Activated CD4-positive, alpha-beta memory T cell treated with anti-CD3 and anti-CD28 coated beads, Interleukin-2, amount 10 ng/mL, durations not matched to agents 7 days and 5 days (primary cell): ENCODE measurements at regions of chr16 and their contacts with region 1.

Region 1: DNA sequence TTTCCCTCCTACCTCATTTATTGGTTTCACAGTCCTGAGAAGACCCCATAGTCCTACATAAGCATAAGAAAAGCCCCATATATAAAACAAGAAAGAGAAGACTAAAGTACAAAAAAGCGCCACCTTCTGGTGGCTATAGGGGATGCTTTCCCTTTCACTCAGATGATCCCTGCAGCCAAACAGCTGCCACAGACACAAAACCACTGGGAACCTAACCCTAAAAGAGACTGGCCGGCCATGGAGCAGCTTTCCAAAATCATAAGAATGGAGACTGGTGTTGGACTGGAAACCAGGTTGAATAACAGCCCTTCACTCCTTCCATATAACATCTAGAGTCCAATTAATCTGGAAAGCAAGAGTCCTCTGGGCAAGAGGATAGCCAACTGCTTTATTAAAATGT is 11.4 kb downstream of the DYNC1LI2 start:
- DNase-seq: peak; percentile 38
- H3K4me3 Mint-ChIP-seq: no peak overlapping the region
- H3K27ac Mint-ChIP-seq: peak overlapping the region; percentile 65
- H3K4me1 Mint-ChIP-seq: peaks cover 25% of the 10 kb centered on the region
- H3K27me3 Mint-ChIP-seq: no peaks in the 10 kb centered on the region

Region 2: GRCh38 chr16:66728117-66728787 is 11.8 kb before region 1 on chr16:
- CTCF ChIA-PET with region 1: interaction called, 23 read pairs
- POLR2A ChIA-PET with region 1: interaction called, 3 read pairs
- DNase-seq: no peak
- H3K4me3 Mint-ChIP-seq: no peak overlapping the region
- H3K27ac Mint-ChIP-seq: no peak overlapping the region
- H3K4me1 Mint-ChIP-seq: peaks cover 2% of the 10 kb centered on the region
- H3K27me3 Mint-ChIP-seq: no peaks in the 10 kb centered on the region

Region 3: GRCh38 chr16:66751303-66751991 is 11.4 kb after region 1 on chr16 and contains the start of gene DYNC1LI2:
- CTCF ChIA-PET with region 1: interaction called, 27 read pairs
- POLR2A ChIA-PET with region 1: interaction called, 5 read pairs
- DNase-seq: peak; percentile 82
- H3K4me3 Mint-ChIP-seq: peak within 1 kb of the TSS; percentile 81
- H3K27ac Mint-ChIP-seq: peak within 1 kb of the TSS; percentile 73
- H3K4me1 Mint-ChIP-seq: peaks cover 42% of the 10 kb centered on the region
- H3K27me3 Mint-ChIP-seq: peaks cover 15% of the 10 kb centered on the region
- total RNA-seq, gene DYNC1LI2: 50.1 to 52.9 TPM

Region 4: DNA sequence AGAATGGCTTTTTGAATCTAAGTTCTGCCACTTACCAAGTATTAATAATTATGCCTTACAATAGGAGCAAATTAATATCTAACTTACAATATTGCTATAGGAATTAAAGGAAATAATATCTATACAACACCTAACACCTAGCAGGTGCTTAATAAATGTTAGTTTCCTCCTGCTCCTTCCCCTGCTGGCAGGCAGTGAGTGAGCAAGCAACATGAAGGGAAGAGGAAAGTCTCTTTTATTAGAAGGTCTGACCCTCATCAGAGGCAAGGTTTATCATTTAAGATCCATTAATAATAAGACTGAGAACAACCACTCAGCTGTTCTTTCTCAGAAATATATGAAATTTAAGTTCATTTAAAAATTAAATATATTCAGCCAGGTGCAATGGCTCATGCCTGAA is 18.1 kb after region 1 on chr16:
- CTCF ChIA-PET with region 1: interaction called, 18 read pairs
- POLR2A ChIA-PET with region 1: no interaction called
- DNase-seq: no peak
- H3K4me3 Mint-ChIP-seq: no peak overlapping the region
- H3K27ac Mint-ChIP-seq: no peak overlapping the region
- H3K4me1 Mint-ChIP-seq: no peaks in the 10 kb centered on the region
- H3K27me3 Mint-ChIP-seq: peaks cover 8% of the 10 kb centered on the region

Region 5: GRCh38 chr16:66899945-66900710 is 160.1 kb after region 1 on chr16:
- CTCF ChIA-PET with region 1: no interaction called
- POLR2A ChIA-PET with region 1: no interaction called
- DNase-seq: no peak
- H3K4me3 Mint-ChIP-seq: no peak overlapping the region
- H3K27ac Mint-ChIP-seq: no peak overlapping the region
- H3K4me1 Mint-ChIP-seq: peaks cover 4% of the 10 kb centered on the region
- H3K27me3 Mint-ChIP-seq: no peaks in the 10 kb centered on the region